Endothelial cell of umbilical vein (primary cell): ENCODE measurements at regions of chr10 and their contacts with region 1.

Region 1: GRCh38 chr10:48215488-48216204 is 58.9 kb downstream of the FRMPD2 start:
- DNase-seq: peak; percentile 57
- H3K4me3 ChIP-seq: no peak overlapping the region
- H3K27ac ChIP-seq: no peak overlapping the region
- H3K4me1 ChIP-seq: no peaks in the 10 kb centered on the region
- H3K27me3 ChIP-seq: peaks cover 3% of the 10 kb centered on the region in 2 experiments
- CTCF ChIP-seq: peak; percentile 81 to 89
- POLR2A ChIP-seq: no peak

Region 2: GRCh38 chr10:48237259-48238250 is 21.9 kb after region 1 on chr10:
- CTCF ChIA-PET with region 1: no interaction called
- POLR2A ChIA-PET with region 1: no interaction called
- dilution Hi-C with region 1: no loop called
- intact Hi-C with region 1: no loop called
- DNase-seq: no peak
- H3K4me3 ChIP-seq: no peak overlapping the region
- H3K27ac ChIP-seq: no peak overlapping the region
- H3K4me1 ChIP-seq: no peaks in the 10 kb centered on the region
- H3K27me3 ChIP-seq: no peaks in the 10 kb centered on the region
- CTCF ChIP-seq: no peak
- POLR2A ChIP-seq: no peak

Region 3: GRCh38 chr10:48253970-48254657 is 38.5 kb after region 1 on chr10:
- CTCF ChIA-PET with region 1: interaction called, 3 read pairs
- POLR2A ChIA-PET with region 1: no interaction called
- dilution Hi-C with region 1: no loop called
- intact Hi-C with region 1: loop called (anchors 5 kb)
- DNase-seq: peak; percentile 78
- H3K4me3 ChIP-seq: no peak overlapping the region
- H3K27ac ChIP-seq: peak overlapping the region; percentile 7
- H3K4me1 ChIP-seq: peaks cover 13% of the 10 kb centered on the region
- H3K27me3 ChIP-seq: peaks cover 0 to 6% of the 10 kb centered on the region in 2 experiments
- CTCF ChIP-seq: no peak
- POLR2A ChIP-seq: no peak

Region 4: DNA sequence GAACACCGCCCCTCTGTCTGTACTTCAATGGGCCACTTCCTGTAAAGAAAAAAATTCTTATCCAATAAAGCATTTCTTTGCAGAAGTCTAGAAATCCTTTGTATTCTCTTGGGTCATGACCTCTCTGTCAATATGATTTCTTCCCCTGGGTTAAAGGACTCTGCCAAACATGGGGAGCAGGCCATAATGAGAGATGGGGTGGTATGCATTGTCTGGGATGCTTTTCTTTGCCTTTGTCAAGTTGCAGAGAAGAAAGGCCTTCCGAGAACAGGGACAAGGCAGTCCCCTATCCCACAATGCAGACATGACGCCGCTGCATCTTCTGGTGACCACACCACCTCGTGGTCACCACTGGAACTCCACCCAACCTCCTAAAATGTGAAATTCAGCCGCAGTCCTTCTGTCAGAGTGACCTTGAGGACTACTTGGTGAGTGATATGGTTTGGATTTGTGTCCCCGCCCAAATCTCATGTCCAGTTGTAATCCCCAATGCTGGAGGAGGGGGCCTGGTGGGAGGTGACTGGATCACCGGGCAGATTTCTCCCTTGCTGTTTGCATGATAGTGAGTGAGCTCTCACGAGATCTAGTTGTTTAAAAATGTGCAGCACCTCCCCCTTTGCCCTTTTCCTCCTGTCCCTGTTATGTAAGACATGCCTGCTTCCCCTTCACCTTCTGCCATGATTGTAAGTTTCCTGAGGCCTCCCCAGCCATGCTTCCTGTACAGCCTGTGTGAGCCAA is 74.0 kb after region 1 on chr10:
- CTCF ChIA-PET with region 1: interaction called, 31 read pairs
- POLR2A ChIA-PET with region 1: no interaction called
- dilution Hi-C with region 1: no loop called
- intact Hi-C with region 1: loop called (anchors 1 kb)
- DNase-seq: peak; percentile 64
- H3K4me3 ChIP-seq: no peak overlapping the region
- H3K27ac ChIP-seq: no peak overlapping the region
- H3K4me1 ChIP-seq: no peaks in the 10 kb centered on the region
- H3K27me3 ChIP-seq: peaks cover 5 to 8% of the 10 kb centered on the region in 2 experiments
- CTCF ChIP-seq: peak; percentile 77 to 87
- POLR2A ChIP-seq: no peak

Region 5: GRCh38 chr10:48506147-48506917 is 290.7 kb after region 1 on chr10:
- CTCF ChIA-PET with region 1: interaction called, 4 read pairs
- POLR2A ChIA-PET with region 1: no interaction called
- dilution Hi-C with region 1: no loop called
- intact Hi-C with region 1: loop called (anchors 1 kb)
- DNase-seq: peak; percentile 67
- H3K4me3 ChIP-seq: no peak overlapping the region
- H3K27ac ChIP-seq: no peak overlapping the region
- H3K4me1 ChIP-seq: peaks cover 19% of the 10 kb centered on the region
- H3K27me3 ChIP-seq: no peaks in the 10 kb centered on the region
- CTCF ChIP-seq: peak; percentile 36 to 53
- POLR2A ChIP-seq: no peak